Vagina (tissue), 2 donors: ENCODE measurements at regions of chr10 and their contacts with region 1.

Region 1: GRCh38 chr10:114095559-114096337 is 52.1 kb downstream of the ADRB1 start:
- DNase-seq: no peak
- H3K4me3 ChIP-seq: no peak overlapping the region
- H3K27ac ChIP-seq: no peak overlapping the region
- H3K4me1 ChIP-seq: peaks cover 5% of the 10 kb centered on the region
- H3K27me3 ChIP-seq: no peaks in the 10 kb centered on the region
- CTCF ChIP-seq: no peak
- POLR2A ChIP-seq: no peak

Region 2: GRCh38 chr10:113802997-113803396 is 292.8 kb before region 1 on chr10:
- intact Hi-C with region 1: loop called (anchors 5 kb)
- DNase-seq: no peak
- H3K4me3 ChIP-seq: no peak overlapping the region
- H3K27ac ChIP-seq: peak overlapping the region; percentile 53
- H3K4me1 ChIP-seq: peaks cover 24% of the 10 kb centered on the region
- H3K27me3 ChIP-seq: no peaks in the 10 kb centered on the region
- CTCF ChIP-seq: no peak
- POLR2A ChIP-seq: no peak

Region 3: DNA sequence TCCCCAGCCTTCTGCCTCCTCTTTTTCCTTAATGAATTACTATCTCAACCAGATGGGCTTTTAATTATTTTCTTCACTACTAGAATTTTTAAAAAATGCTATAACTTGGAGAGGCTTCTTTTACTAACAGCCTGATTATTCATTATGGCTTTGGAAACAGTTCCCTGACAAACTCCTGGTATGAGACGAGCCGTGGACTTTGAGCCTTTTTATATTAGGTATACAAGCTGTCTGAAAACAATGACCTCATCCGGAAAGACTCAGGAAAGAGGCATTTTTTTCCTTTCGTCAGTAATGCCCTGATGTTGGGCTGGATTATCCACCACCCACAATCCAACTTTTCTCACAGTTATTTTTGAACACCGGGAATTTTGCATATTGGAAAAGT is 589.1 kb after region 1 on chr10:
- intact Hi-C with region 1: no loop called
- DNase-seq: no peak
- H3K4me3 ChIP-seq: peak overlapping the region; percentile 20 to 21
- H3K27ac ChIP-seq: peak overlapping the region; percentile 44
- H3K4me1 ChIP-seq: peaks cover 34% of the 10 kb centered on the region
- H3K27me3 ChIP-seq: no peaks in the 10 kb centered on the region
- CTCF ChIP-seq: no peak
- POLR2A ChIP-seq: no peak